Mammary epithelial cell (primary cell): ENCODE measurements at regions of chr9 and their contacts with region 1.

Region 1: DNA sequence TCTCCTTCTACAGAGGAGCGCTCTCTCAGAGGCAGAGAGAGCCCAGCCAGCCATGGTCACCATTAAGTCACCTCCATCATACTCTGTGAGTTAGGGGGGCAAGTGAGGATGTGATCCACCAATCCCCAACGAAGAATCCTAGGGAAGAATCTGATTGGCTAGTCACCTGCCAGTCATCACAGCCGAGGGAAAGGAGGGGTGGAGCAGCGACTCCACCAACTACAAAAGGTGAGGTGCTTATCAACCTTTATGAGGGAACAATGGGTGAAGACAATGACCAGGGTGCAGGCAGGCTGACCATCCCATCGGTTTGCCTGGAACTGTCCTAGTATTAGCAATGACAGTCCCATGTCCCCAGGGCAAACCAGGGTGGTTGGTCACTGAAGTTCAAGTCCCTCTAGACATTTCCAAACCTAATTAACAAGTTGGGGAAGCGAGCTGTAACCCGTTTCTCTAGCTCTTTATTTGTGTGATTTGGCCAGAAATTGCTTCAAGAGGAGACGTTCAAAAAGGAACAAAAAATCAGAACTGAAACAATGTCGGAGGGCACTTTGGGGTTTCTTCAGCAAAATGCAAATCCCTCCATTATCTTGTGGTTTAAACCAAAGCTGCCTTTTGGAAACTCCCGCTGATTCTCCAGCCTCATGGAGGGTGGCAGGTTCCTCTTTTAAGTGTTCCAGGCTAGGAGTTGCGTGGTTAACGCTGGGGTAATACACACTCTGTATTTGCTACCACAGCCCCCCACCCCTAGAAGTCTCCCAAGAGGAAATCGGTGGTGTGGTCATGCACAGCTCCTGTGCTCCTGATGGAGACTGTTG is 18.8 kb upstream of the FCN1 start:
- DNase-seq: no peak
- H3K4me3 ChIP-seq: no peak overlapping the region
- H3K27ac ChIP-seq: no peak overlapping the region
- H3K4me1 ChIP-seq: no peaks in the 10 kb centered on the region
- H3K27me3 ChIP-seq: no peaks in the 10 kb centered on the region
- CTCF ChIP-seq: no peak

Region 2: GRCh38 chr9:134983074-134983473 is 46.5 kb after region 1 on chr9:
- CTCF ChIA-PET with region 1: no interaction called
- dilution Hi-C with region 1: loop called (anchors 5 kb)
- in situ Hi-C with region 1: no loop called
- intact Hi-C with region 1: no loop called
- DNase-seq: no peak
- H3K4me3 ChIP-seq: no peak overlapping the region
- H3K27ac ChIP-seq: no peak overlapping the region
- H3K4me1 ChIP-seq: no peaks in the 10 kb centered on the region
- H3K27me3 ChIP-seq: no peaks in the 10 kb centered on the region
- CTCF ChIP-seq: no peak

Region 3: DNA sequence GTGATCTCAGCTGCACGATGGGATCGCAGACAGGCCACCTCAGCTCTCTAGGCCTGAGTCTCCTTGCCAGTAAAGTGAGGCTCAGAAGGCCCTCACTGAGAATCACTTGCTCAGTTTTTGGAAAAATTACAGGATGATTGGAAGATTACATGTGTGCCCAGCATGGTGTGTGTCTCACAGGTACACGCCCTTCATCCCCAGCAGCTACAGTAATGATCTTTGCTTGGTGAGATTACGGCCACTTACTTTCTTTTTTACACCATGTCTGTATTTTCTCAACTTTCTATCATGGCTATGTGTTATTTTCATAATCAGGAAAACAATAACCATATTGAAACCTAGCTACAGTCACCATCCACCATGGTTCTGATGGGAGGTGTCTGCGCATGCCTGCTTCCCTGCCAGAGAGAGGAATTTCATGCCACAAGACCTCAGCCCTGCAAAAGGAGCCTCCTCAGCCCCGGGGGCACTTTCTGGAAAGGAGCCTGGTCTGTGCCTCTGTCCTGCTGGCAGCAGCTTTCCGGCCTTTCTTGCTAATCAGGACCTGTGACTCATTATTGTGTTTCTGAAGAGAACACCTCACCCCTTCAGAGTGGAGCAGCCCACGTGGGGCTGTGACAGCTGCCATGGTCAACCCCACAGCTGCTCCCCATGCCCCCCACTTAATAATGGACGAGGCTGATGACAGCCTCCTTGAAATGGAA is 86.7 kb after region 1 on chr9:
- CTCF ChIA-PET with region 1: no interaction called
- dilution Hi-C with region 1: loop called (anchors 5 kb)
- in situ Hi-C with region 1: no loop called
- intact Hi-C with region 1: no loop called
- DNase-seq: peak; percentile 79
- H3K4me3 ChIP-seq: no peak overlapping the region
- H3K27ac ChIP-seq: no peak overlapping the region
- H3K4me1 ChIP-seq: no peaks in the 10 kb centered on the region
- H3K27me3 ChIP-seq: no peaks in the 10 kb centered on the region
- CTCF ChIP-seq: no peak

Region 4: DNA sequence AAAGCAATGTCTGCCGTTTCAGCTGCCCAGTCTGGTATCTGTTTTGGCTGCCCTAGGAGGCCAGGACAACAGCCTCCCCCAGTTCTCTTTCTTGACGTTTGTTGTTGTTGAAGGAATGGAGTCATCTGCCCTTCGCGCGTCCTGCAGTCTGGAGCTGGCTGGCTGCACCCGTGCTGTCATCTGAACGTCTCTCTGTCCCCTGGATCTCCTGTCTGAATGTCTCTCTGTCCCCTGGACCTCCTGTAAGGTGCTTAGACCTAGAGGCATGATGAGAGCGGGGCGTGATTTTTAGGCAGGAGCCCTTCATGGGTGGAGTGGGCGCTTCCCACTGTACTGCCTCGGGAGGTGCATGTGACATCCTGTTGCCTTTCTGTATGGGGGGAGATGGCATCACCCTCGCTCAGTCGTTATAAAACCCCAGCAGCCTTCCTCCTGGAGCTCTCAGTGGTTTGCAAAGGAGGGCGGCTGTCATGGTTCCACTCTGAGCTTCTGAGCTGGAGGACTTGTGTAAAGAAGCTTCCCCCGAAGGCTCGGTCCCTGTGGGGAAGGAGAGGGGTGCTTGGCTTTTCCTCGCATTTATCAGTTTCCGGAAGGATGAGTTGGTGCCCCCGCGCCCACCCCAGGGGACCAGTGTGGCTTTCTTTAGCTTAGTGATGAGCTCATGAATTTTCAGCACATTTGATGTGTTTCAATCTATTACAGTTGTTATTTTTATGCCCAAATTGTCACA is 101.1 kb after region 1 on chr9:
- CTCF ChIA-PET with region 1: no interaction called
- dilution Hi-C with region 1: no loop called
- in situ Hi-C with region 1: no loop called
- intact Hi-C with region 1: no loop called
- DNase-seq: no peak
- H3K4me3 ChIP-seq: no peak overlapping the region
- H3K27ac ChIP-seq: no peak overlapping the region
- H3K4me1 ChIP-seq: no peaks in the 10 kb centered on the region
- H3K27me3 ChIP-seq: no peaks in the 10 kb centered on the region
- CTCF ChIP-seq: no peak